Psoas muscle (tissue), 8 donors: ENCODE measurements at regions of chr22 and their contacts with region 1.

Region 1: GRCh38 chr22:46798366-46799350 is 36.2 kb downstream of the TBC1D22A start:
- DNase-seq: peak; percentile 78 to 84
- ATAC-seq: peak; percentile 86 to 94 (median 90)
- H3K4me3 ChIP-seq: no peak overlapping the region
- H3K27ac ChIP-seq: no peak overlapping the region
- H3K4me1 ChIP-seq: peaks cover 2% of the 10 kb centered on the region
- H3K27me3 ChIP-seq: no peaks in the 10 kb centered on the region
- CTCF ChIP-seq: peak; percentile 95

Region 2: DNA sequence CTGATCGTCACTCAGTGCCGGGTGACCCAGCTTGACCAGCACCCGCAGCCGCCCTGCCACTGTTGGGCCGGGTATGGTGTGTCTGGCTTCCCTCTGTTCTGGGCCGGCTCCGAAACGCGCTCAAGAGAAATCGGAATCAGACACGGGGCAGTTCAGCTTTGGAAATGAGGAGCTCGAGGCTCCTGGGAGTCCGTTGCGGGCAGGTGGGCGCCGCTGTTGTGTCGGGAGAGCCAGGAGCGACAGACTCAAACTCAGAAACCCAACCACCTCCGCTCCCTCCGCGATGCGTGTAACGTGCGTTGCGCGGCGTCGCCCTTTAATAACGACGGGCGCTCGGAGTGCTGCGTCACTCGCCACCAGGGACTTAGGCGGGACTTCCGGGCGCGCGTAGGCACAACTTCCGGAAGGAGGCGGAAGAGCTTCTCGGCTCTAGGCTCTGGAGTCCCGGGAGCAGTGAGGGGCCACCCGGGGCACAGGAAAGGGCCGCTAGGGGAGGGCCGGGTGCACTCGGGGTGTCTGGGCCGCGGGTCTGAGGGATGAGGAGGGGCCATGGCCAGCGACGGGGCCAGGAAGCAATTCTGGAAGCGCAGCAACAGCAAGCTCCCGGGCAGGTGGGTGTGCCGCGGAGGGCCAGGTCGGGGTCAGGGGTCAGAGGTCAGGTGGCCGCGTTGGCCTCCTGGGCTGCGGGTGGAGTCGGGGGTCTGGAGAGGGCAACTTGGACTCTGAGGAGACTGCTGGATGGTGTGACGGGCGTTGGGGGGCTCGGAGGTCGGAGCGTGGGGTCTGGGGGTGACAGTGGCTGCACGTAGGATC is 36.2 kb before region 1 on chr22 and contains the start of gene TBC1D22A:
- intact Hi-C with region 1: loop called in 1 of 2 experiments (anchors 2 kb)
- DNase-seq: peak; percentile 95 to 98
- ATAC-seq: peak; percentile 93 to 97 (median 95)
- H3K4me3 ChIP-seq: peak within 1 kb of the TSS; percentile 77
- H3K27ac ChIP-seq: peak within 1 kb of the TSS; percentile 96
- H3K4me1 ChIP-seq: peaks cover 12% of the 10 kb centered on the region
- H3K27me3 ChIP-seq: no peaks in the 10 kb centered on the region
- CTCF ChIP-seq: no peak
- total RNA-seq, gene TBC1D22A: 15.7 to 25.0 (median 20.6) TPM

Region 3: DNA sequence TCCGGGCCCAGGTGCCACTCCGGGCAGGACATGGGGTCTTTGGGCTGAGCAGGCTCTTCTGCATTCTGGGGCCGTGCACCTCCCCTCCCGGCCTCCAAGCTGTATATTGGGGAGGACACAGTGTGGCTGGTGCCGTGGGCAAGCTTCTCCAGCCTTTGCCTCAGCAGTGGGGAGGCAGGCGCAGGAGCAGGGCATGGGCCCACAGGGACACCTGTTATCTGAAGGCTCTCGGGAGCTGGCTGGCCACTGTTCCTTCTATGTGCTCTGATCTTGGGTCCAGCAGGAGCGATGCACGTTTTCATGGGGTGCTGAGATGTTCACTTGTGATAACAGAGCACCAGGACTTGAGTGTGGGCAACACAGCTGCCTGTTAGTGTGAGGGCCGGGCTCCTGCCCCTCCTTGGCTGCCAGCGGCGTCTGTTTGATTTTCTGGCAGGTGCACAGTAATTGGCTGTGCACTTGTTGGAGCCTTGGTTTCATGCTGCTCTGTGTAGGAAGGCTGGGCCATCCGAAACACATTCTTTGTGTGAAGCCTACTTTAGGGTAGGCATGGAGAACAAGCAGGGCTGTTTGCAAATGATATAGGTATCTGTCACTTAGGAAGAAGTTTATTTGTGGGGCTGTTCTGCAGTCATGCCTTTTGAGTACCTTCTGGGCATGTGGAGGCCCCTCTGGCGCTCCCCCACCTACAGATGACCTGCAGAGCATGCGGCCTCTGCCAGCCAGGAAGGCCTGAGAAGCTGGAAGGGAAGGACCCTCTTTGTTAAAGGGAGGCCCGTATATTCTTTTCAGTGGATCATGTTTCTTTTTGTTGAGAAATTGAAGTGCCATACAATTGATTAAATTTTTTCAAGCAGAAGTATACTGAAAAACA is 165.3 kb after region 1 on chr22:
- intact Hi-C with region 1: no loop called
- DNase-seq: peak in 1 of 2 donors; percentile 28
- ATAC-seq: no peak
- H3K4me3 ChIP-seq: no peak overlapping the region
- H3K27ac ChIP-seq: no peak overlapping the region
- H3K4me1 ChIP-seq: no peaks in the 10 kb centered on the region
- H3K27me3 ChIP-seq: no peaks in the 10 kb centered on the region
- CTCF ChIP-seq: no peak

Region 4: GRCh38 chr22:48492366-48493320 is 1694.0 kb after region 1 on chr22:
- intact Hi-C with region 1: loop called in 1 of 2 experiments (anchors 10 kb)
- DNase-seq: peak; percentile 55 to 66
- ATAC-seq: peak; percentile 61 to 87 (median 75)
- H3K4me3 ChIP-seq: no peak overlapping the region
- H3K27ac ChIP-seq: no peak overlapping the region
- H3K4me1 ChIP-seq: no peaks in the 10 kb centered on the region
- H3K27me3 ChIP-seq: peaks cover 0 to 42% (median 12%) of the 10 kb centered on the region in 3 donors
- CTCF ChIP-seq: peak; percentile 57